AG04449 (cell line): ENCODE measurements at regions of chr14 and their contacts with region 1.

Region 1: DNA sequence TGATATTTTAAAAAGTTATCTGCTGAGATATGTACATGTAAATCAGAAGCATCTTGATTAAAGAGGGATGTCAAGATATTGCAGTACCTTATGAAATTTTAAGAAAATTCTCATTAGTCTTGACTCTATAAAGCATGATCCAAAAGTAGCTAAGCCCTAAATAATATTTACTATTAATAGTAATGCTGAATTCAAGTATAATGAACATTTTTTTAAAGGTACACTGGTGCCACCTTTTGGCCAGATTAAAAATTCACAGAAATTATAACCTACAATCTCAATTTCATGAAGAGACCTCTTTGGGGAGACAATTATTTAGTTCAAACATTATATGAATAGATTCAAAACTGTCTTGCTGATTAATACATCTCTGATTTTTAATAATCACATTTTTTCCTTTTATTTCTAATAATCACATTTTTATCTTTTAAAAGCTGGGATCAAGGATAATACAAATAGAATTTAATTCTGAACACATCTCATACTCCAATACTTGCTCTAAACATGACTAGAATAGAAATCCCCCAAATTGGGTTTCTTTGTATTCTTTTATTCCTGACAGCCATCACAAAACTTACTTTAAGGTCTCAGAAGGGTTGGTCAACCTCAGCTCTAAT is 13.4 kb downstream of the AKAP5 start:
- DNase-seq: no peak
- H3K4me3 ChIP-seq: no peak overlapping the region
- CTCF ChIP-seq: no peak

Region 2: DNA sequence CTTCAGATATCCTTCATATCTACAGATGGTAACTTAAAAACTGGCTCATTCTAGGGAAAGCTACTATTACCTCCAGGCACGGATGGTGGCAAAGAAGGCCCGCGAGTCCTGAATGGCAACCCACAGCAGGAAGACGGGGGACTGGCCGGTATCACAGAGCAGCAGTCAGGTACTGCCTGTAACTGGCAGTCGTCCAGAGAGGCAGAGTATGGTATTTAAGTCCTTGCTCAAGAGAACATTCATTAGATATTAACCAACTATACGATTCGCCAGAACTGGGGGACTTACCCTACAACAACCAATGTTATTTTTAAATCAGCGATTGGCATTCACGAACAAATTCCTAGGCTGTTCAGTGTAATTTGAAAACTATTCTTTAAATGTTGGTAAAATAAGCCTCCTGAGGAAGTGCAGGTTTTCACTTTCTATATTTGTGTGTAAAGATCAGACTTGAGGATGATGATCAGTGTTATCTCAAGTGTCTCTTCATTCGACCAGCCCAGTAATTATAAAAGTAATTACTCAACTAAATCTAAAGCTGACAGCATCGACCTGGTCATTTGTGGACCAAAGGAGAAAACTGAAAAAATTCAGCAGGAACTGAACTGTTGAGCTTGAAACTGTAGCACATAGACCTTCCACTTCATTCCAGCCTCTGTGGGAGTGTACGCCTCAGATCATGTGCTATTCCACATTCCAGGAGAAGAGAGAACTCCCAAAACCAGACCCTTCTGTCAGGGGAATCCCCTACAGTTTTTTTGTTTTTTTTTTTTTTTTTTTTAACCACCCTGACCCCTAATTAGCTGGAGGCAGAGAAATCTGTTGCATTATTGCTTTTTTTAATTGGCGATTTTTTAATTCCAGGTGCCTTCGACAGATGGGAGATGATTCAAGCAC is 260.1 kb before region 1 on chr14:
- CTCF ChIA-PET with region 1: no interaction called
- POLR2A ChIA-PET with region 1: no interaction called
- DNase-seq: no peak
- H3K4me3 ChIP-seq: no peak overlapping the region
- CTCF ChIP-seq: no peak

Region 3: DNA sequence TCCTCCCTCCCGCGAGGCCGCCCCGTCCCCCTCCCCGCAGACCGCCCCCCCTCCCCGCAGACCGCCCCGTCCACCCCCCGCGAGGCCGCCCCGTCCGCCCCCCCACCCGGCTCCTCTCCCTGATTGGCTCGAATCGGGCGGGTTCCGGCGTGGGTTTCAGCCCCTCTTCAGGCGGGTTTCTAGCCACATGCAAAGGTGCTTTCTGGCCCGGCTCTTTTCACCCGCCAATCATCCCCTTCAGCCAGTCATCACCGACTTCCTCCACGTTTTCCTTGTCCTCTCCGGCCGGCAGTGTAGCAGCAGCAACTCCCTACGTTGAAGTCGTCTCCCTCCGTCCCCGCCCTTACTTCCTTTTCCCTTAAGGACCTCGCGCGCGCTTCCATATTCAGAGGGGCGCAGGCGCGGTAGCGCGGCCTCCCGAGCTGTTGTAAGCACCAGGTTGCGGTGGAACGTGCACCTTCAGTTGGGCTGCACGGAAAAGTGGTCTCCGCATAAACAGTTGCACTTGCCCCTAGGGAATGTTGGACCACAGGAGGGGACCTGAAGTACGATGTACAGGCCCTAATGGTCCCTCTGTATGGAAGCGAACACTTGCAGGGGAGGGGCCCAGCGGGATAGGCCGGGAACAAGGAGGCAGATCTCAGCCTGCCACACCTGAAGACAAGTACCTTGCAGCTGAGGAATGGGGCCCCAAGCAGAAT is 140.0 kb before region 1 on chr14:
- CTCF ChIA-PET with region 1: interaction called, 257 read pairs
- POLR2A ChIA-PET with region 1: no interaction called
- DNase-seq: peak; percentile 82
- H3K4me3 ChIP-seq: peak overlapping the region; percentile 73
- CTCF ChIP-seq: no peak

Region 4: DNA sequence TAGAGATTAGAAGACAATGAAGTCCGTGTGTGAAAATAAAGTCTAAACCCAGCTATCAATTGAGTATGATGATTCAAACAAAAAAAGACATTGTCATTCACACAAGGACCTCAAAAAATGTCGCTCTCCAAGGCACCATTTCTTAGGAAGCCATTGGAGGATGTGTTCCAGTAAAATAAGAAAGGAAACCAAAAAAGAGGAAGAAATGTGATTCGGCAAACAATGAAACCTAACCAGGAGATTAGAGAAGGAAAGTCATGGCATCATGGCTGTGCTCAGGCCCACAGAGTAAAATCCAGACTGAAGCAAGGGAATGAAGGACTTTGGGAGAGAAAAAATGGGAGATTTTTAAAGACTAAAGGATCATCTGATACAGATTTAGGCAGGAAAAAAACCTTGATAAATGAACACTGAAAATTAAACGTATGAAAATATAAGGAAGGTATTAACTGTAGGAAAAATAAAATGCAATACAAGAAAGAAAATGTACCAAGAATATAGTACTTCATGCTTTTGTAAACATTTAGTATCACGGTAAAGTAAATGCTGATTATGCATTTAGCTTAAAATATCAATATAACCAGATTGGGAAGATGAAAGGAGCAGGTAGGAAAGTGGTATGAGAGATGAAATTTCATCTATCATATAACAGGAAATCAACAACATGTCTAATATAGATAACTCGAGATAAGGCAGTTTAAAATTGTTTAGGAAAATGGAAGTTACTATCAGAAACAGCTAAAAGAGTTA is 128.8 kb before region 1 on chr14:
- CTCF ChIA-PET with region 1: interaction called, 257 read pairs
- POLR2A ChIA-PET with region 1: no interaction called
- DNase-seq: no peak
- H3K4me3 ChIP-seq: no peak overlapping the region
- CTCF ChIP-seq: no peak

Region 5: DNA sequence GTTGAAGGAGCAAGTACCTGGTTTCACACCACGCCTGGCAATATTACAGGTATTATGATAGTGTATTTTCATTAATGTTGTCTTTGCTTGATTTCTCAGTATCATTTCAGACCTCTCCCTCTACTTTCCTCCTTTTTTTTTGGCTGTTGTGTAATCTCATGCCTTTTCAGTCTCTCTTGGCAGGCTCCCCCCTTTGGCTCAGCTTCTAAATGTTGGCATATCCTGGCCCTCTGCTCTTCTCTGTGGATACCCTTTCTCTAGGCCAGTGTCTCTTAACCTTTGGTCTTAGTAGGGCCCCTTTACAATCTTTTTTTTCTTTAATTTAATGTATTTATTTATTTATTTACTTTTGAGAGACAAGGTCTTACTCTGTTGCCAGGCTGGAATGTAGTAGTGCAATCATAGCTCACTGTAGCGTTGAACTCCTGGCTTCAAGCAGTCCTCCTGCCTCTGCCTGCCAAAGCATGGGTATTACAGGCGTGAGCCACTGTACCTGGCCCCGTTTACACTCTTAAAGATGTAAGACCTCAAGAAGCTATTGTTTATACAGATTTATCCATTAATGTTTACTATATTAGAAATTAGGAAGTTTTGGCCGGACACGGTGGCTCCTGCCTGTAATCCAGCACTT is 77.8 kb before region 1 on chr14:
- CTCF ChIA-PET with region 1: interaction called, 44 read pairs
- POLR2A ChIA-PET with region 1: no interaction called
- DNase-seq: no peak
- H3K4me3 ChIP-seq: no peak overlapping the region
- CTCF ChIP-seq: no peak

Region 6: DNA sequence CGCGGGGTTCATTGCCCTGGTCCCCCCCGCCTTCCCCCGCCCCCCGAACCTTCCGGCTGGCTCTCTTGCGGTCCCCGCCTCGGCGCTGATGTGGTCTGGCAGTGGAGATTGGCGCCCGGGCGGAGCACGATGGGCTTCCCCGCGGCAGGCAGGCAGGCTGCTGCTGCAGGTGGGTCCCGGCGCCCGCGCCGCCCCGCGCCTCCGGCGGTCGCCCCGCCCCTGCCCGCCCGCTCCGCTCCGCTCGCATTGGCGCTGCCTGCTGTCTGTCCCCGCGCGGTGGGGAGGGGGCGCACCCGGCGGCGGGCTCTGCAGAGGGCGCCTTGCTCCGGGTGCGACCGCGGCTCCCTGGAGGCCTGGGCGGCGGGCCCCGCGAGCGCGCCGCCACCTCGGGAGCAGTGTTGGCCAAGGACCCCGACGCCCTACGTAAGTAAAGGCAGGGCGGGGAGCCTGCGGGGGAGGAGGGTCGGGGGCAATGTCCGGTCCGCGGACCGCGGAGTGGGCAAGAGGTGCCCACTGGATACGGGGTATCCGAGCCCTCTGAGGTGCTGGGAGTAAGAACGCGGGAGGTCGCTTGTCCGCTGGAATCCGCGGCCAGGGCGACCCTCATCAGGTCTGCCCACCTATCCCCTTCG is 13.4 kb before region 1 on chr14 and contains the start of gene AKAP5:
- CTCF ChIA-PET with region 1: interaction called, 24 read pairs
- POLR2A ChIA-PET with region 1: no interaction called
- DNase-seq: no peak
- H3K4me3 ChIP-seq: peak within 1 kb of the TSS; percentile 74
- CTCF ChIP-seq: no peak

Region 7: GRCh38 chr14:64491637-64492036 is 12.9 kb after region 1 on chr14:
- CTCF ChIA-PET with region 1: interaction called, 46 read pairs
- POLR2A ChIA-PET with region 1: no interaction called
- DNase-seq: no peak
- H3K4me3 ChIP-seq: no peak overlapping the region
- CTCF ChIP-seq: no peak

Region 8: DNA sequence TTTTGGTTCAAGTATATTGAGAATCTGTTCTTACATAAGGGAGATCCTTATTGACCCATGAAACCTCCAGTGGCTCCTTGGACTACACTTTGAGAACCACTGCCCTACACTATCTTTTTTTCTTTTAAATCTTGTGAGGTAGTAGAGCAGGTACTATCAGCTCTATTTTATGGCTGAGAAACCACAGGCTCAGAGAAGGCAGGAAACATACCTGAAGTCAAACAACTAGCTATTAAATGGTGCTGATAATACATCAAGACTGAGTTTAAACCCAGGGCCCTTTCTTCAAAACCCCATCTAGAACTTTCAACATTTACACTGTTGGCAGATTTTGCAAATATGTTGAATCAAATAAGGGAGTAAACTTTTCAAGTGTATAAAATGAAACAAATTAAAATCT is 18.0 kb after region 1 on chr14:
- CTCF ChIA-PET with region 1: interaction called, 46 read pairs
- POLR2A ChIA-PET with region 1: no interaction called
- DNase-seq: no peak
- H3K4me3 ChIP-seq: no peak overlapping the region
- CTCF ChIP-seq: no peak